ENCODE measurements at regions of chr15 and their contacts with region 1.

Region 1: GRCh38 chr15:42920519-42921227 is at the start of gene TTBK2:
- DNase-seq: peak; percentile 92 to 99
- H3K4me3 ChIP-seq: peak within 1 kb of the TSS; percentile 79 to 94
- H3K27ac ChIP-seq: peak within 1 kb of the TSS; percentile 80 to 91
- H3K4me1 ChIP-seq: peaks cover 0 to 6% of the 10 kb centered on the region in 2 donors
- H3K27me3 ChIP-seq: no peaks in the 10 kb centered on the region
- CTCF ChIP-seq: peak in 1 of 3 experiments; percentile 9
- total RNA-seq, gene TTBK2: 25.3 TPM

Region 2: DNA sequence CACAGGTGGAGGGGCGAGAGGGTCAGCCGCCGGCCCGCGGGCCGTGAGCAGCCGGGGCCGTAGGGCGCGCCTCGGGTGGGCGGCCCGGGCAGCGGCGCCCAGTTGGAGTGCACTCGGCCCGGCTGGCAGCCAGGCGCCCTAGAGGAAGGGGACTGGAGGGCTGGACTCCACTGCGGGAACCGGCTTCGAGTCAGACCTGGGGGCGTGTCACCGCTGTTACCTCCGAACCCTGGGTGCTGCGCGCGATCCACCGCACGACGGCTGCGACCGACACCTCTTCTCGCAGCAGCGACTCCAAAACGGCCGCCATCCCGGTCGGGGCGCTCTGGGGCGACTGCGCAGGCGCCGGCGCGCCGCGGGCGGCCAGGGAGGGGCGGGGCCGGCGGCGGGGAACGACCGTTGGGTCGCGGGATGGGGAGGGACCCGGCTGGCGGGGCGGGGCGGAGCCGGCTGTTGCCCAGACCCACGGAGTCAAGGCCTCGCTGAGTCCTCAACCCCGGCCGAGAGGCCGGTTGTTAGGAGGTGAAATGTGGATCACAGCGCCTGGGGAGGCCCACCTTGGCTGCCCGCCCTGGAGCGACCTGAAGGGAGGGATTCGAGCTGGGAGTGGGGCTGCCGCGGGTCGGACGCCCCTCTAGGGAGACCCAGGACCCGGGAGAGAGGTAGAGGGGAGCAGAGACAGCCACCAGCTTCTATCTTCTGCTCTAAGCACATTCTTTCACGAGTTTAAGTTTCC is 183.7 kb before region 1 on chr15 and contains the start of gene CDAN1:
- intact Hi-C with region 1: loop called (anchors 1 kb)
- DNase-seq: peak; percentile 66 to 94
- H3K4me3 ChIP-seq: peak within 1 kb of the TSS; percentile 68 to 92
- H3K27ac ChIP-seq: peak within 1 kb of the TSS; percentile 84 to 91
- H3K4me1 ChIP-seq: peaks cover 9 to 20% of the 10 kb centered on the region in 2 donors
- H3K27me3 ChIP-seq: no peaks in the 10 kb centered on the region
- CTCF ChIP-seq: no peak
- total RNA-seq, gene CDAN1: 16.2 TPM

Region 3: GRCh38 chr15:42858540-42858939 is 62.1 kb before region 1 on chr15:
- intact Hi-C with region 1: loop called (anchors 5 kb)
- DNase-seq: no peak
- H3K4me3 ChIP-seq: no peak overlapping the region
- H3K27ac ChIP-seq: peak overlapping the region; percentile 35 to 60
- H3K4me1 ChIP-seq: peaks cover 0 to 9% of the 10 kb centered on the region in 2 donors
- H3K27me3 ChIP-seq: no peaks in the 10 kb centered on the region
- CTCF ChIP-seq: no peak

Region 4: DNA sequence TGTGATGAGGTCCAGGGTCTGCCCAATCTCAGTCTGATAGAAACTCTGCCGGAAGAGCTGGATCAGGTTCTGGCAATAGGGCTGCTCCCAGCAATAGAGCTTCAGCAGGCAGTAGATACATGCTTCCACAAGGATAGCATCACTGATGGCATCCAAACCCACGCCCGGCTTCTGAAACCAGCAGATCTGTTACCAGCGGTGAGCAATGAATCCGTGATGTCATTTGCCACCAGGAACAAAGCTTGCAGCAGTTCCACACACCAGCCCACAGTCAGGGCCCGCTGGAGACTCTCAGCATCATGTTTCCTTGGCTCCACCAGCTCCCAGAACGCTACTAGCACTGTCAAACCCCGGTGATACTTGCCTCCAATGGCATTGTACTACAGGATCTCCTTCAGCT is 19.2 kb after region 1 on chr15:
- intact Hi-C with region 1: no loop called
- DNase-seq: no peak
- H3K4me3 ChIP-seq: no peak overlapping the region
- H3K27ac ChIP-seq: no peak overlapping the region
- H3K4me1 ChIP-seq: no peaks in the 10 kb centered on the region
- H3K27me3 ChIP-seq: no peaks in the 10 kb centered on the region
- CTCF ChIP-seq: no peak